Breast epithelium (tissue), 4 donors: ENCODE measurements at regions of chr13 and their contacts with region 1.

Region 1: DNA sequence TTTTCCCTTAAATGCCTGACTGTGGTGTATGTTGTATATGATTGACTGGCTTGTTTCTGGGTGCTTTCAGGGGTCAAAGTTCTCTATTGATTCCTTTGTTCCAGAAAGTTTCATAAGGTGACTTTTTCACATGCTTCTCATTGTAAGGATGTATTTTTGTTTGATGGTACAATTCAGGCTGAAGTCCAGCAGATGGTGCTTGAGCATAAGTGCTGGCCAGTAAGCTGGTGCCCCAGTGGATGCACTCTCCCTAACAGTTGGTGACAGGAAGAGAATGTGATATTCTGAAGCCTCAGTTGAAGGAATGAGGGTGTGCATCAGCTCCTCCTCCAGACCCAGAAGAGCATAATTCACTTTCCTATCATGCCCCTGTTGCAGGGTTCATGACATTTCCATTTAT is 1941.6 kb upstream of the PRR20A start:
- DNase-seq: no peak
- H3K4me3 ChIP-seq: no peak overlapping the region
- H3K27ac ChIP-seq: no peak overlapping the region
- H3K4me1 ChIP-seq: no peaks in the 10 kb centered on the region
- H3K27me3 ChIP-seq: no peaks in the 10 kb centered on the region
- CTCF ChIP-seq: no peak
- POLR2A ChIP-seq: no peak

Region 2: GRCh38 chr13:53672005-53672404 is 1527.1 kb before region 1 on chr13:
- intact Hi-C with region 1: loop called (anchors 10 kb)
- DNase-seq: no peak
- H3K4me3 ChIP-seq: no peak overlapping the region
- H3K27ac ChIP-seq: no peak overlapping the region
- H3K4me1 ChIP-seq: no peaks in the 10 kb centered on the region
- H3K27me3 ChIP-seq: no peaks in the 10 kb centered on the region
- CTCF ChIP-seq: no peak
- POLR2A ChIP-seq: no peak